HEK293 (cell line): ENCODE measurements at regions of chr9 and their contacts with region 1.

Region 1: DNA sequence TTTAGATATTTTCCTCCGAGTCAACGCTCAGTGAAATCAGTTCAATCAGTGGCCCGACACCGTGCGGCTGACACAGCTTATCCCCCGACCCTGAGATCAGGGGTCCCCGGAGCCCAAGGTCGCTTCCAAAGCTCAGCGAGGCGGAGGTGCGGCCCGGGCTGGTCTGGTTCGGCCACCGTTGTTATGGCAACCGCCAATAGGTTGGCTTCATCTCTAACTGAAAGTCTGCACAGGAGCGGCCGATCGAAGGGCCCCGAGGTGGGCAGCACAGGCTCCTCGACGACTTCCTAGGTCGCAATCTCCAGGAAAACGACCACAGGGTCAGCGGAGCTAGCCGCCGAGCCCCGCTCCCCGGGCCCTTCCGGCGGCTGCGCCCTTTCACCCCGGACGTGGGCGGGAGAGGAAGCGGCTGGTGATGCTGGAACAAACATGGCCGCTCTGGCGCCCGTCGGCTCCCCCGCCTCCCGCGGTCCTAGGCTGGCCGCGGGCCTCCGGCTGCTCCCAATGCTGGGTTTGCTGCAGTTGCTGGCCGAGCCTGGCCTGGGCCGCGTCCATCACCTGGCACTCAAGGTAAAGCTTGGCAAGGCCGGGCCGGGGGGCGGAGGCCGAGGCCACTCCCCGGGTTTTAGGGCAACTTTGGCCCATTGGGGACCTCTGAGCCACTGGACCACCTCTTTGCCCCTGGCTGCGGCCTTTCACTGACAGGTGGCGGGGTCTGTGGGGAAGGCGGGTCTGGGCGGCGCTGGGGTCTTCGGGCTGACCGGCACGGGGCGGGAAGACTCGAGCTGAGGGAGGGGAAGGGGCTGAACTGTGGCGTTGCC is at the start of gene GPR107:
- H3K4me3 ChIP-seq: peak within 1 kb of the TSS; percentile 91
- H3K27ac ChIP-seq: peak within 1 kb of the TSS; percentile 79
- H3K4me1 ChIP-seq: no peaks in the 10 kb centered on the region; the same call in 1 of the 2 replicates
- CTCF ChIP-seq: no peak

Region 2: GRCh38 chr9:130073373-130073772 is 19.7 kb after region 1 on chr9:
- CTCF ChIA-PET with region 1: interaction called, 8 read pairs
- POLR2A ChIA-PET with region 1: interaction called, 11 read pairs
- H3K4me3 ChIP-seq: no peak overlapping the region
- H3K27ac ChIP-seq: no peak overlapping the region
- H3K4me1 ChIP-seq: peaks cover 5% of the 10 kb centered on the region; the same call in 1 of the 2 replicates
- CTCF ChIP-seq: no peak

Region 3: DNA sequence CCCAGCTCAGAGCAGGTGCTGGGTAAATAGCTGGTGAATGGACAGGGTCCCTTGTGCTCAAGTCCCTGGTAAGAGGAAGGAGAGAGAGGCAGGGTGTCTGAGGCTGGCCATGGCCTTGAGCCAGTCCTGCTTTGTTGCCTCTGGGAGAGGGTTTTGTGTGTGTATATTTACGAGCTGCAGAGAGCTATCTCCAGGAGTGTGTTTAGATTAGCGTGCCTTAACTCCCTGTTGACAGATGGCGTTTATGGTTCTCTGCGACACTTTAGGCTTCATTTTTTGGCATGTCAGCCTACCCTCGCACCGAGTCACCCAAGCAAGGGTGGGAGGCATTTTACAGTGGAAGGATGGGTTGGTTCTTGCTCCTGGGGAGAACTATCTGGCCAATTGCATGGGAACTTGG is 234.0 kb after region 1 on chr9:
- CTCF ChIA-PET with region 1: no interaction called
- POLR2A ChIA-PET with region 1: no interaction called
- H3K4me3 ChIP-seq: no peak overlapping the region
- H3K27ac ChIP-seq: no peak overlapping the region; the same call in 1 of the 2 replicates
- H3K4me1 ChIP-seq: peaks cover 8% of the 10 kb centered on the region
- CTCF ChIP-seq: no peak